ENCODE measurements at regions of chr10 and their contacts with region 1.

Region 1: GRCh38 chr10:35355971-35356724 is 19.8 kb downstream of the CCNY start:
- DNase-seq: peak; percentile 72
- H3K4me3 Mint-ChIP-seq: peak overlapping the region; percentile 75
- H3K27ac Mint-ChIP-seq: peak overlapping the region; percentile 98
- H3K4me1 Mint-ChIP-seq: peaks cover 58% of the 10 kb centered on the region
- H3K27me3 Mint-ChIP-seq: no peaks in the 10 kb centered on the region

Region 2: GRCh38 chr10:35379226-35380137 is 23.3 kb after region 1 on chr10:
- intact Hi-C with region 1: loop called (anchors 1 kb)
- DNase-seq: peak; percentile 59
- H3K4me3 Mint-ChIP-seq: peak overlapping the region; percentile 14
- H3K27ac Mint-ChIP-seq: peak overlapping the region; percentile 14
- H3K4me1 Mint-ChIP-seq: peaks cover 36% of the 10 kb centered on the region
- H3K27me3 Mint-ChIP-seq: no peaks in the 10 kb centered on the region

Region 3: DNA sequence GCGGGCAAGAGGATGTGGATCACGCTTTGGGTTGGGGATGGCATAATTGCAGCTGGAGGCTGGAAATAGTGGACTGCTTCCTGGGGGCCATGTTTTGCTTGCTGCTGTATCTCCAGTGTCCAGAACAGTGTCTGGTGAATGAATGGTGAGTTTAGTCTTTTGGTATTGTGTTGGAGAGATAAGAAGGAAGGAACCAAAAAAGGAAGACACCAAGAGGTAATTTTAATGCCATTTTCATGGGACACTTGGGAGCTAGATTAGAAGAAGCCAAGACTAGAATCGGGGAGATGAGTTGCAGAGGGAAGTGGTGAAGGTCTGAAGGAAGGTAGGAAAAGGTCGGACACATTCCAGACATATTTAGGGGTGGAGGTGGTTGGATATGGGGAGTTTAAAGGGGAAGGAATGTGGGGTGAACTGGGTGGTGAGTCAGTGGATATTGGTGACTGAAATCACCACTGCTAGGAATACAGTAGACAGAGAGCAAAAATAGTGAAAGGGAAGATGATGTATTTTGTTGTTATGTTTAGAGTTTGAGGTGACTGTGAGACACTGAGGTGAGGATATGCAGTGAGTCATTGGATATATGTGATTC is 56.8 kb after region 1 on chr10:
- intact Hi-C with region 1: loop called (anchors 2 kb)
- DNase-seq: no peak
- H3K4me3 Mint-ChIP-seq: no peak overlapping the region
- H3K27ac Mint-ChIP-seq: no peak overlapping the region
- H3K4me1 Mint-ChIP-seq: peaks cover 41% of the 10 kb centered on the region
- H3K27me3 Mint-ChIP-seq: no peaks in the 10 kb centered on the region

Region 4: GRCh38 chr10:35442028-35442427 is 85.9 kb after region 1 on chr10:
- intact Hi-C with region 1: loop called (anchors 1 kb)
- DNase-seq: no peak
- H3K4me3 Mint-ChIP-seq: no peak overlapping the region
- H3K27ac Mint-ChIP-seq: peak overlapping the region; percentile 80
- H3K4me1 Mint-ChIP-seq: peaks cover 33% of the 10 kb centered on the region
- H3K27me3 Mint-ChIP-seq: no peaks in the 10 kb centered on the region

Region 5: DNA sequence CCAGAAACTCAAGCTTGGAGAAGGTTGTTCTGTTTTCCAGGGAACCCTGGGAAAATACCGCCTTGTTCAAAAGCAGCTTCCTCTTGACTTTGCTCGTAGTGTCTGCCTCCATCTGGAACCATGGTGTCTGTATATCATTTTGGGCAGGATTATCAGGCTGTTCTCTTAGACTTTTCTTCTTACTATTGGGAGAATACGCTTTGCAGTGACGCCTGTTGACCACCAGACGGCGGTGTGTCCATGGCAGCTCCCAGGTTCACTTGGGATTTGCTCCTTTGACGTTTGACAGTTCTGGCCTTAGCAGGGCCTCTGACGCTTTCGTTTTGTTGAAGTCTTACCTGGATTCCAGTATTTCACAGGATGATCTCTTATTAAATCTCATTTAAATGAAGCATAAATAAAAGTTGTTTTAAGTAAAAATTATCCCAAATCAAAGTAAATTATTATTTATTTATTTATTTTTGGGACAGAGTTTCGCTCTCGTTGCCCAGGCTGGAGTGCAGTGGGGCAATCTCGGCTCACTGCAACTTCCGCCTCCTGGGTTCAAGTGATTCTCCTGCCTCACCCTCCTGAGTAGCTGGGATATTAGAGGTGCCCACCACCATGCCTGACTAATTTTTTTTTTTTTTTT is 207.2 kb after region 1 on chr10:
- intact Hi-C with region 1: loop called (anchors 10 kb)
- DNase-seq: peak; percentile 81
- H3K4me3 Mint-ChIP-seq: no peak overlapping the region
- H3K27ac Mint-ChIP-seq: peak overlapping the region; percentile 66
- H3K4me1 Mint-ChIP-seq: peaks cover 10% of the 10 kb centered on the region
- H3K27me3 Mint-ChIP-seq: no peaks in the 10 kb centered on the region

Measured in activated CD4-positive, alpha-beta T cell treated with anti-CD3 and anti-CD28 coated beads, Interleukin-2, amount 10 ng/mL, durations not matched to agents 24 days and 14 days (primary cell).